Right ventricle myocardium inferior (tissue), 1 donor: ENCODE measurements at regions of chr11 and their contacts with region 1.

Region 1: DNA sequence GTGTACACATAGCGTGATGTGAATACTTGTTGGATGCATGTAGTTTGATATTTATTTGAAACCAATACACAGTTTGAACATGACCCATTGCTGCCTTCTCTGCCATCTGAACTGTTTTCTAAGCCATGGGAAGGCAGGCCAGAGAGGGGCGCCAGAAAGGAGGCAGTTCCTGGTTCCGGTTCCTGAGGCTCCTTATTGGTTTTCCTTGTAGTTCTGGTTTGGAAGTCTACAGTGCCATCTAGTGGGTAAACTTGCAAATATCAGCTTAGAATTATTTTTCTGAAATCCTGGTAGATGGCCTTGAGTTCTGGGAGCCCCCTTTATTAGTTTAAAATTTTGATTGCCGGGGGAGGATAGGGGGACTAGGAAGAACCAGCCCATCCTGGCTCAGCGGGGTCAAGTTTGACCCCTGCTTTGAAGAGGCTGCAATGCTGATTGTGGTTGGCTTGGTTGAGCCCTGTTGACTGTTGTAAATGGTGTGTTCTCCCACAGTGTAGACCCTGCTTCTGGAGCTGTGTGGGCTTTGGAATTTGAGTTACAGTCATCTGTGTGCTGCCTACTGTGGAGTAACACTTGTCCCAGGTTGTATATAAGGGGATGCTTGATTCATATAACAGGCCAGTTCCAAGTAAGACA is 48.4 kb downstream of the GRAMD1B start:
- DNase-seq: no peak
- ATAC-seq: peak; percentile 64

Region 2: DNA sequence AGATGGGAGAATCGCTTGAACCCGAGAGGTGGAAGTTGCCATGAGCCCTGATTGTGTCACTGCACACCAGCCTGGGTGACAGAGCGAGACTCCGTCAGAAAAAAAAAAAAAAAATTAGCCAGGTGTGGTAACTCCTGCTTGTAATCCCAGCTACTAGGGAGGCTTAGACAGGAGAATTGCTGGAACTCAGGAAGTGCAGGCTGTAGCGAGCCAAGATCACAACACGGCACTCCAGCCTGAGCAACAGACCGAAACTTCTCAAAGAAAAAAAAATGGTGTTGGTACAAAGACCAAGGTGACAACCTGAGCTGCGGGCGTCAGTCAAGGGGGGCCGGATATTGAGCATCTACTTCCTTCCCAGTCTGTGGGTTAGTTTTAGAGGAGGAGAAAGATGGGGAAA is 368.1 kb before region 1 on chr11:
- intact Hi-C with region 1: loop called (anchors 2 kb)
- DNase-seq: no peak
- ATAC-seq: no peak

Region 3: DNA sequence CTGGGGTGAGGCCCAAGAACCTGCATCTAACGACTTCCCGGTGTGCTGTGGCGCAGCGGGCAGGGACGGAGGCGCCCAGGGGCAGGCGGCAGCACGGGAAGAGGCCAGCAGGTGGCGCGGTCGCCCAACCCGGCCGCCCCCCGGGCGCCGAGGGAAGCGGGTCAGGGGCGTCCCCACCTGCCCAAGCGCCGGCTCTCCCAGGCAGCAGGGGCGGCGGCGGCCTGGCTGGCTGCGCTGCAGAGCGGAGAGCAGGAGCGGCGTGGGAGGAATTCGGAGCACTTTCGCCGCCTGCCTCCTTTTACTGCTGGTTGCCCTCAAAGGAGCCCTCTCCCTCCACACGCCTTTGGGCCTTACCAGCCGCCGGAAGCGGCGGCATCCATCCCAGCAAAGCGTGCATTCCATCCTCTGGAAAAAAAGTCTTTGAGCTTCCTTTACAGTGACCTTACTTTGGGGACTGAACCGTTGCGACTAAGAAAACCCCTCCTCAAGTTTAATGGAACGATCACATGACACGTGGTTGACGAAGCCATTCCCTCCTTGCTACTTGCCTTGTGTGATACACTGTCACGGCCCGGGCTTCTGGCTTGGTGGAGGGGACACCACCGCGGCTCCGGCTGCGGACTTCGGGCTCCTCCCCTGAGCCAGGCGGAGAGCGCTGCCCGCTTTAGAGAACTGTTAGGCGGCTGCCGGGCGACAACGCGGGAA is 176.6 kb before region 1 on chr11:
- intact Hi-C with region 1: loop called (anchors 2 kb)
- DNase-seq: peak; percentile 82
- ATAC-seq: peak; percentile 84

Region 4: GRCh38 chr11:123338330-123339005 is 140.0 kb before region 1 on chr11:
- intact Hi-C with region 1: no loop called
- DNase-seq: no peak
- ATAC-seq: no peak

Region 5: GRCh38 chr11:123357961-123358841 is 120.3 kb before region 1 on chr11:
- intact Hi-C with region 1: loop called (anchors 5 kb)
- DNase-seq: peak; percentile 65
- ATAC-seq: peak; percentile 60

Region 6: DNA sequence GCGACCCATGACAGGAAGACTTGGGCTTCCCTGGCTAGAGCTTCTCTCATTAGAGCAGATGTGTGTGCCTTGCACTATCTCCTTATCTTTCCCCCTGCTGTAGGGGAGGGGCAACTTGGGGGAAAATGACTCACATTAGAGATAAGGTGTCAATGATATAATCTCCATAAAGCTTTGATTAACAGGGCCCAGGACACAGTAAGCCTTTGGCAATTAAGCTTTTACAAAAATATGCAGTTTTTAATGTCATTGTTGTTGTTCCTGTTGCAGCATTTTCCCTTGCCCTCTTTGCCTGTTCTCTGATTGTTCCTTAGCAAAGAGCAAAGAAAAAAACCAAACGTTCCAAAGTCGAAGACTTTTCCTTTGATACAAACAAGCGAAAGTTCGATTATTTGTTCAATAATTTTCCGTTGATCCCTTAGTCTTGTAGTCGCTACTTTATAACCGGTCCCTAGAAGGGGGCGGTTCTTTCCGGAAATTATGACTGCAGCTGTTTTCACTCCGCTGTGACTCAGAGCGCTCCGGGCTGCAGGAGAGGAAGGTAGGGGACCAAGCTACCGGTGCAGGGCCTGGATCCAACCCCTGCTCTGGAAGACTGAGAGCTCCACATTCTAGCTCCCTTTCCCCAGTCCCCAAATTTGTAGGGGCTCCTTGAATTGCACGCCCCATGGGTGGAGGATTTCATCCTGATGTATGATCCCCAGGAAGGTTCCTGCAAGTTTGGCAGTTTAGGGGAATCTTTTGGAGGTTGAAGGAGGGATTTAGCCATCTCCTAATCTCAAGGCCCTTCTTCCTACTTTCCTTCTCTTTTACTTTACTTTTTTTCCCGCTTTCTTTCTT is 636.7 kb after region 1 on chr11 and contains the start of gene VWA5A:
- intact Hi-C with region 1: no loop called
- DNase-seq: peak; percentile 74
- ATAC-seq: peak; percentile 95
- total RNA-seq, gene VWA5A: 4.2 TPM